ENCODE measurements at regions of chrX and their contacts with region 1.

Region 1: DNA sequence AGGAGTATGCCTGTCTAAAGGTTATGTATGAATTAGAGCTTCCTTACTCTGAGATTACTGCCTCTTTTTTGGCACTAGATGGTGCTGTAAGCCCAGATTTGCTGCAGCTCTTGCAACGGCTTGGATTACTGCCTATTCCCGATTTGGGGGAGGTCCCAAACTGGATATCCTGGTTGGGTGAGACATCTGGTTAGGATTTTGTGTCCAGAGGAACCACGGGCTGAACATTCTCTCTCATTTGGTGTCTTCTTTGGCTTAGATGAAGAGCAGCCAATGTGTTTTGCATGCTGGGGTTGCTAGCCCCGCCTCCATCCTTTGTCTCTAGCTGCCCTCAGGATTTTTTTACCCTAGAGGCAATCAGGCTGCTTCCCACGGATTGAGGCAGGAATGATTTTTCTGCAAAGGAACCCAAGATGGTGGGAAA is 31.9 kb downstream of the F8A1 start:
- DNase-seq: peak; percentile 35
- ATAC-seq: peak; percentile 58
- H3K4me3 Mint-ChIP-seq: peak overlapping the region; percentile 60
- H3K27ac Mint-ChIP-seq: no peak overlapping the region
- H3K4me1 Mint-ChIP-seq: no peaks in the 10 kb centered on the region
- H3K27me3 Mint-ChIP-seq: peaks cover 18% of the 10 kb centered on the region

Region 2: GRCh38 chrX:154761977-154762522 is 156.0 kb before region 1 on chrX:
- CTCF ChIA-PET with region 1: no interaction called
- POLR2A ChIA-PET with region 1: no interaction called
- DNase-seq: no peak
- ATAC-seq: no peak
- H3K4me3 Mint-ChIP-seq: peak overlapping the region; percentile 88
- H3K27ac Mint-ChIP-seq: peak overlapping the region; percentile 94
- H3K4me1 Mint-ChIP-seq: peaks cover 29% of the 10 kb centered on the region
- H3K27me3 Mint-ChIP-seq: no peaks in the 10 kb centered on the region

Region 3: GRCh38 chrX:154902408-154902807 is 15.7 kb before region 1 on chrX:
- CTCF ChIA-PET with region 1: interaction called, 12 read pairs
- POLR2A ChIA-PET with region 1: no interaction called
- DNase-seq: no peak
- ATAC-seq: no peak
- H3K4me3 Mint-ChIP-seq: no peak overlapping the region
- H3K27ac Mint-ChIP-seq: no peak overlapping the region
- H3K4me1 Mint-ChIP-seq: peaks cover 7% of the 10 kb centered on the region
- H3K27me3 Mint-ChIP-seq: peaks cover 13% of the 10 kb centered on the region

Region 4: GRCh38 chrX:154986826-154987576 is 68.9 kb after region 1 on chrX:
- CTCF ChIA-PET with region 1: interaction called, 11 read pairs
- POLR2A ChIA-PET with region 1: no interaction called
- DNase-seq: no peak
- ATAC-seq: no peak
- H3K4me3 Mint-ChIP-seq: no peak overlapping the region
- H3K27ac Mint-ChIP-seq: no peak overlapping the region
- H3K4me1 Mint-ChIP-seq: no peaks in the 10 kb centered on the region
- H3K27me3 Mint-ChIP-seq: peaks cover 4% of the 10 kb centered on the region

Region 5: GRCh38 chrX:155086202-155086840 is 168.2 kb after region 1 on chrX:
- CTCF ChIA-PET with region 1: interaction called, 11 read pairs
- POLR2A ChIA-PET with region 1: no interaction called
- DNase-seq: peak; percentile 45
- ATAC-seq: peak; percentile 64
- H3K4me3 Mint-ChIP-seq: no peak overlapping the region
- H3K27ac Mint-ChIP-seq: no peak overlapping the region
- H3K4me1 Mint-ChIP-seq: no peaks in the 10 kb centered on the region
- H3K27me3 Mint-ChIP-seq: no peaks in the 10 kb centered on the region

Region 6: GRCh38 chrX:155143959-155144548 is 226.0 kb after region 1 on chrX:
- CTCF ChIA-PET with region 1: interaction called, 10 read pairs
- POLR2A ChIA-PET with region 1: no interaction called
- DNase-seq: no peak
- ATAC-seq: peak; percentile 44
- H3K4me3 Mint-ChIP-seq: peak overlapping the region; percentile 15
- H3K27ac Mint-ChIP-seq: peak overlapping the region; percentile 39
- H3K4me1 Mint-ChIP-seq: peaks cover 13% of the 10 kb centered on the region
- H3K27me3 Mint-ChIP-seq: no peaks in the 10 kb centered on the region

Measured in activated CD8-positive, alpha-beta T cell treated with anti-CD3 and anti-CD28 coated beads, Interleukin-2, amount 10 ng/mL, durations not matched to agents 7 days and 5 days (primary cell).